ENCODE measurements at regions of chr22 and their contacts with region 1.

Region 1: DNA sequence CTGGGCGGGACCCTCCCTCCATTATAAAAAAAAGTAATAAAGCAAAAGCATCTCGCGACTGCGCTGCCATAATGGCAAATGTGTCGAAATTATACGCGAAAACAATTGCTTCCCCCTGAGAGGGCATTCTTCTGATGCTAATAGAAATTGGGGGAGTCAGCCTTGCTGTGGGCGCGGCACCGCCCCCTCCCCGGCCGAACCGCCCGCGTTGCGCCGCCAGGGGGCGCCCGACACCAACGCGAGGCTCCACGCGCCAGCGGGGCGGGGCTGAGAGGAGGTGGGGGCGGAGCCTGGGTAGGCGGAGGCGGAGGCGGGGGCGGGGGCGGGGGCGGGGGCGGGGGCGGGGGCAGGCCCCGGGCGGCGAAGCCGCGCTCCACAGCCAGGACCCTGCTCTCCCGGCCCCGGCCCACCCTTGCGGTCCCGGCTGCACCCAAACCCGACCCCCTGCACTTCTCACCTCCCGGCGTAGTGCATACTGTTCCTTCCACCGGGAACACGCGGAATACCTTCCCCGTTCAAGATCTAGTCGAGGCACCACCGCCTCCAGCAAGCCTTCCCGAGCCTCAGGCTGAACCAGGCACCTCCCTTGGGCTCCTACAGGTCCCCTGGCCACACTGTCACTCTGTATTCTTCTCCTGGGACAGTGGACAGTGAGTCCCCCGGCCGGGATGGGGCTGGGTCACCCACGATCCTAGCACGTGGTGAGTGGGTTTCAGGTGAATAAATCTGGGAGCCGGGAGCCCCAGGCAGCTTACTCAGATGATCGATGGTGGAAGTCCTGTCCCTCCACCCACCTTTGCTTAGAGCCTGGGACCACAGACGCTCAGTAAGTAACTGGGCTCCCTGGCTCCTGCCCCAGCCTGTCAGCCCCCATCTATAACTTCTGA is 15.5 kb upstream of the UPK3A start:
- DNase-seq: peak; percentile 72 to 86 (median 80)
- H3K4me3 ChIP-seq: peak overlapping the region; percentile 65 to 93 (median 68)
- H3K4me3 Mint-ChIP-seq: peak overlapping the region; percentile 88 to 93
- H3K27ac ChIP-seq: peak overlapping the region; percentile 18 to 68
- H3K27ac Mint-ChIP-seq: peak overlapping the region; percentile 35 to 85 (median 56)
- H3K4me1 ChIP-seq: peaks cover 44 to 47% of the 10 kb centered on the region in 2 donors
- H3K4me1 Mint-ChIP-seq: peaks cover 42% of the 10 kb centered on the region
- H3K27me3 ChIP-seq: peaks cover 0 to 4% of the 10 kb centered on the region in 2 donors
- H3K27me3 Mint-ChIP-seq: peaks cover 13 to 23% (median 15%) of the 10 kb centered on the region in 3 donors
- CTCF ChIP-seq: peak; percentile 93

Region 2: GRCh38 chr22:44026630-44027511 is 1242.3 kb before region 1 on chr22:
- intact Hi-C with region 1: no loop called
- DNase-seq: peak; percentile 97 to 100 (median 98)
- H3K4me3 ChIP-seq: peak overlapping the region; percentile 15 to 74 (median 37)
- H3K4me3 Mint-ChIP-seq: peak overlapping the region; percentile 83 to 89
- H3K27ac ChIP-seq: peak overlapping the region; percentile 98 to 99
- H3K27ac Mint-ChIP-seq: peak overlapping the region; percentile 100
- H3K4me1 ChIP-seq: peaks cover 56 to 59% of the 10 kb centered on the region in 2 donors
- H3K4me1 Mint-ChIP-seq: peaks cover 57% of the 10 kb centered on the region
- H3K27me3 ChIP-seq: no peaks in the 10 kb centered on the region
- H3K27me3 Mint-ChIP-seq: peaks cover 0 to 6% (median 0%) of the 10 kb centered on the region in 3 donors
- CTCF ChIP-seq: no peak

Region 3: GRCh38 chr22:45240810-45241631 is 28.2 kb before region 1 on chr22 and contains the start of gene KIAA0930:
- intact Hi-C with region 1: loop called in 1 of 2 experiments (anchors 2 kb)
- DNase-seq: peak; percentile 47 to 70 (median 59)
- H3K4me3 ChIP-seq: peak within 1 kb of the TSS; percentile 75 to 90 (median 77)
- H3K4me3 Mint-ChIP-seq: peak within 1 kb of the TSS; percentile 98
- H3K27ac ChIP-seq: peak within 1 kb of the TSS; percentile 69 to 71
- H3K27ac Mint-ChIP-seq: peak within 1 kb of the TSS; percentile 88 to 95 (median 94)
- H3K4me1 ChIP-seq: peaks cover 57 to 70% of the 10 kb centered on the region in 2 donors
- H3K4me1 Mint-ChIP-seq: peaks cover 73% of the 10 kb centered on the region
- H3K27me3 ChIP-seq: no peaks in the 10 kb centered on the region
- H3K27me3 Mint-ChIP-seq: peaks cover 0 to 6% (median 3%) of the 10 kb centered on the region in 3 donors
- CTCF ChIP-seq: no peak
- polyA plus RNA-seq, gene KIAA0930: 14.0 to 89.1 (median 15.6) TPM

Region 4: DNA sequence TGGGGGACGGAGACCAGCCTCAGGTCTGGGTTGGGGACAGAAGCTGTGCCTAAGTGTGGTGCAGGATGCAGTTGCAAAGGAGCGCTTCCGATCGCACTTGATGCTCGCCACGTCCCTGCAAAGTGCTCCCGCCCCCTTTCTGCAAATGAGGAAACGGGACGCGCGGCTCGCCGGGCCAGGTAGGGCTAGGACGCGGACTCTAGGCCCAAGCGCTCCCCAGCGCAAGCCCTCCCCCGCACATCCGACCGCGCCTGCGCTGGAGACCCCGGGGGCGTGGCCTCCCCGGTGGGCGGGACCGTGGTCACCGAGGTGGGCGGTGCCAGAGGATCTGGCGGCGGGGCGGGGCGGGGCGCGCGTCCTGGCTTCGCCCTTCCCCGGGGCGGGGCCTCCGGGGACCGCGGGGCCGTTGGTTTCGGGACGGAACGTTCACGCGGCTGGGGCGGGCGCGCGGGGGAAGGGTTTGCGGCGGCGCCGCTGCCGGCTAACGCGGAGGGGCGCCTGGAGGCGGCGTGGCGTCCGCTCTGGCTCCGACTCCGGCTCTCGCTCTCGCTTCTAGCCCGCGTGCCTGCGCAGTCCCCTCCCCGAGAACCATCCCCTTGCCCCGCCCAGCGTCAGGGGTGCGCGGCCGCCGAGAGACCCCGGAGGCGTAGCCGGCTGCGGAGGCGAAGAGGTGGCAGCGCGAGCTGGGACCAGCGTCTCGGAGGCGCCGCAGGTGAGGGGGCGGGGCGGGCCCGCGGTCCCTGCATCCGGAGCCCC is 40.4 kb after region 1 on chr22 and contains the start of gene FAM118A:
- intact Hi-C with region 1: loop called (anchors 2 to 5 kb)
- DNase-seq: peak; percentile 87 to 89 (median 89)
- H3K4me3 ChIP-seq: peak within 1 kb of the TSS; percentile 85 to 88 (median 88)
- H3K4me3 Mint-ChIP-seq: peak within 1 kb of the TSS; percentile 88 to 91
- H3K27ac ChIP-seq: peak within 1 kb of the TSS; percentile 88 to 90
- H3K27ac Mint-ChIP-seq: peak within 1 kb of the TSS; percentile 88 to 96 (median 94)
- H3K4me1 ChIP-seq: peaks cover 35 to 40% of the 10 kb centered on the region in 2 donors
- H3K4me1 Mint-ChIP-seq: peaks cover 59% of the 10 kb centered on the region
- H3K27me3 ChIP-seq: no peaks in the 10 kb centered on the region
- H3K27me3 Mint-ChIP-seq: peaks cover 2 to 5% (median 4%) of the 10 kb centered on the region in 3 donors
- CTCF ChIP-seq: no peak
- polyA plus RNA-seq, gene FAM118A: 20.0 to 423 (median 27.9) TPM

Region 5: DNA sequence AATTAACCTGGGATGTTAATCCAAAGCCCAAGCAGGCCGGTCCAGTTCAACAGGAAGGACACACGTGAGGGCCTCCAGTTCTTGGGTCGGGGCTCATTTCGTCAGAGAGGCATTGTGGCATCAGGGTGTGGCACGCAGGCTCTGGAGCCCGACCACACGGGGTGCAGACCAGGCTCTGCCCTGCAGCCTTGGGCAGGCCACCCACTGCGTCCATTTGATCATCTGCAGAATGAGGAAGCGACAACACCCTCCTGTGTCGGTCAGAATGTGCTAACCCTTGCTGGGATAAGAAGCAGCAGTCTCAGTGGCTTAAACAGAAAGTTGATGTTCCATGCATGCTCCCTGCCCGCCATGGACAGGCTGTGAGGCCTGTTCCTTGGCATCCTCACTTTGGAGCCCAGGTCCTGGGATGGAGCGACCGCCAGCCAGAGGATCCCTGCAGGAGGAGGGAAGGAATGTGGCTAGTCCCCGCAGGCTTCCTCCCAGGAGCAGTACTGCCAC is 155.1 kb after region 1 on chr22:
- intact Hi-C with region 1: loop called in 1 of 2 experiments (anchors 5 kb)
- DNase-seq: peak; percentile 92 to 94 (median 93)
- H3K4me3 ChIP-seq: peak overlapping the region in 1 of 3 experiments; percentile 21
- H3K4me3 Mint-ChIP-seq: peak overlapping the region in 1 of 2 donors; percentile 62
- H3K27ac ChIP-seq: peak overlapping the region; percentile 85 to 90
- H3K27ac Mint-ChIP-seq: peak overlapping the region; percentile 93 to 97 (median 96)
- H3K4me1 ChIP-seq: peaks cover 46 to 47% of the 10 kb centered on the region in 2 donors
- H3K4me1 Mint-ChIP-seq: peaks cover 51% of the 10 kb centered on the region
- H3K27me3 ChIP-seq: no peaks in the 10 kb centered on the region
- H3K27me3 Mint-ChIP-seq: peaks cover 0 to 8% (median 0%) of the 10 kb centered on the region in 3 donors
- CTCF ChIP-seq: no peak

Region 6: DNA sequence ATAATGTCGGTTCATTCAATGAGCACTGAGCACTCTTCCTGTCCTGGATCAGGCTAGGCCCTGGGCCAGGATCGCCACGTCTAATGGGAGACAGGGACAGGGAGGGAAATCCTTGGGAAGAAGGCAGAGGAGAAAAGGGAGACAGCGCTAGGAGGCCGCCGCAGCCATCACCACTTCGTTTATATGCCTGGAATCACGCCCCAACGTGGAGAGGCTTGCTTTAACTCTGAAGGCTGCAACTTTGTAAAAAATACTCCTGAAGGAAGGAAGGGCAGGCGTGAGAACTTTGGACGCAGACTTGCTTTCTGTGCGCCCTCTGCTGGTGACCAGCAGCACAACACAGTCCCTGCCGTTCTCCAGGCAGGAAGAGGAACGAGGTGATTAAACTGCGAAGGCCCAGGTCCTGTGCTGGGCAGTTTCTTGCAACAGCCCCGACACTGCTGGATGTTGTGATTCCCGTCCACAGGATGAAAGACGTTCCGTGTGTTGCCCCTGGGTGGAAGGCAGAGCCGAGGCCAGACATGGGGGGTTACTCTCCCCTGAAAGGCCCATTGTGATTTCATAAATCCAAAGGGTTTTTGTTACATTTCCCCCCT is 166.4 kb after region 1 on chr22:
- intact Hi-C with region 1: loop called (anchors 2 kb)
- DNase-seq: peak; percentile 86 to 91 (median 87)
- H3K4me3 ChIP-seq: peak overlapping the region in 1 of 3 experiments; percentile 58
- H3K4me3 Mint-ChIP-seq: peak overlapping the region in 1 of 2 donors; percentile 75
- H3K27ac ChIP-seq: peak overlapping the region; percentile 55 to 83
- H3K27ac Mint-ChIP-seq: peak overlapping the region; percentile 68 to 92 (median 86)
- H3K4me1 ChIP-seq: peaks cover 28% of the 10 kb centered on the region in 2 donors
- H3K4me1 Mint-ChIP-seq: peaks cover 41% of the 10 kb centered on the region
- H3K27me3 ChIP-seq: no peaks in the 10 kb centered on the region
- H3K27me3 Mint-ChIP-seq: peaks cover 7 to 17% (median 9%) of the 10 kb centered on the region in 3 donors
- CTCF ChIP-seq: peak; percentile 97

Region 7: GRCh38 chr22:45553351-45554039 is 284.3 kb after region 1 on chr22:
- intact Hi-C with region 1: loop called (anchors 5 kb)
- DNase-seq: peak; percentile 29 to 38 (median 31)
- H3K4me3 ChIP-seq: no peak overlapping the region
- H3K4me3 Mint-ChIP-seq: peak overlapping the region in 1 of 2 donors; percentile 60
- H3K27ac ChIP-seq: no peak overlapping the region
- H3K27ac Mint-ChIP-seq: no peak overlapping the region
- H3K4me1 ChIP-seq: peaks cover 6 to 11% of the 10 kb centered on the region in 2 donors
- H3K4me1 Mint-ChIP-seq: peaks cover 7% of the 10 kb centered on the region
- H3K27me3 ChIP-seq: peaks cover 0 to 4% of the 10 kb centered on the region in 2 donors
- H3K27me3 Mint-ChIP-seq: peaks cover 12 to 14% (median 13%) of the 10 kb centered on the region in 3 donors
- CTCF ChIP-seq: peak; percentile 81